ENCODE measurements at regions of chr19 and their contacts with region 1.

Region 1: GRCh38 chr19:17847538-17848366 is at the start of gene JAK3:
- DNase-seq: peak; percentile 76 to 88 (median 88)
- ATAC-seq: peak; percentile 68 to 76
- H3K4me3 ChIP-seq: peak within 1 kb of the TSS; percentile 72
- H3K27ac ChIP-seq: peak within 1 kb of the TSS; percentile 80
- H3K4me1 ChIP-seq: peaks cover 6% of the 10 kb centered on the region
- H3K27me3 ChIP-seq: no peaks in the 10 kb centered on the region
- total RNA-seq, gene JAK3: 1.6 to 5.3 (median 4.0) TPM

Region 2: GRCh38 chr19:17309198-17309961 is 538.4 kb before region 1 on chr19 and contains the start of gene DDA1:
- intact Hi-C with region 1: no loop called
- DNase-seq: peak; percentile 99 to 100 (median 100)
- ATAC-seq: peak; percentile 94
- H3K4me3 ChIP-seq: peak within 1 kb of the TSS; percentile 77
- H3K27ac ChIP-seq: no peak within 1 kb of the TSS
- H3K4me1 ChIP-seq: no peaks in the 10 kb centered on the region
- H3K27me3 ChIP-seq: no peaks in the 10 kb centered on the region
- total RNA-seq, gene DDA1: 29.7 to 33.6 (median 30.8) TPM

Region 3: GRCh38 chr19:17539238-17540117 is 308.3 kb before region 1 on chr19:
- intact Hi-C with region 1: no loop called
- DNase-seq: peak; percentile 98
- ATAC-seq: peak; percentile 92 to 93
- H3K4me3 ChIP-seq: peak overlapping the region; percentile 22
- H3K27ac ChIP-seq: no peak overlapping the region
- H3K4me1 ChIP-seq: no peaks in the 10 kb centered on the region
- H3K27me3 ChIP-seq: no peaks in the 10 kb centered on the region

Region 4: DNA sequence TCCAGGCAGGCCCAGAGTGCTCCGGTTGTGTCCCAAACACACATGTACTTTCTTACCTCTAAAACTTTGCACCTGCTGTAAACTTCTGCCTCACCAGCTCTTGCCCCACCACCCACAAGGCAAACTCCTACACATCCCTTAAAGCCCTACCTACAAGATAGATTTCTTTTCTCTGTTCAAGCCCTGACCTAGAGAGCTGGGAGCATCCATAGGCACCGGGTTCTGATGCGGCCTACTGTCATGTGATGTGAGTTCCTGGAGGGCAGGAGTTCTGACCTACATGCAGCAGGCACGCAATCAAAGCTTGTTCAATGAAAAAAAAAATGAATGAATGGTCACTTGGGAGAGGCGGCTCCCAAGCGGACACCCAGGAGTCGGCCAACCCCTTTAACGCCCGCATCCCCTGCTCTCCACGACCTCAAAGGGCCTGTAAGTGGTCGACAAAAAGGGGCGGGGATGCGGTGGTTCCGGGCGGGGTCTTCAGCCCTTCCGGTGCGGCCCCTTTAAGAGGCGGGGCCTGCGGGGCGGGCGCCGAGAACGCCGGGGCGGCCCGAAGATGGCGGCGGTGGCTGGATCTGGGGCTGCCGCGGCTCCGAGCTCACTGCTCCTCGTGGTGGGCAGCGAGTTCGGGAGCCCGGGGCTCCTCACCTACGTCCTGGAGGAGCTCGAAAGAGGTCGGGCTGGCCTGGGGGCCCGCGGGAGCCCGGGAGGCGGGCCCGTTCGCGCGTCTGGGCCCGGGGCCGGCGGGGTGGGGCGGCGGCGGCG is 128.6 kb before region 1 on chr19 and contains the start of gene MAP1S:
- intact Hi-C with region 1: loop called in 1 of 4 experiments (anchors 5 kb)
- DNase-seq: peak; percentile 71 to 89 (median 87)
- ATAC-seq: peak; percentile 55 to 63
- H3K4me3 ChIP-seq: peak within 1 kb of the TSS; percentile 96
- H3K27ac ChIP-seq: peak within 1 kb of the TSS; percentile 63
- H3K4me1 ChIP-seq: peaks cover 15% of the 10 kb centered on the region
- H3K27me3 ChIP-seq: no peaks in the 10 kb centered on the region
- total RNA-seq, gene MAP1S: 24.8 to 35.5 (median 31.6) TPM

Region 5: DNA sequence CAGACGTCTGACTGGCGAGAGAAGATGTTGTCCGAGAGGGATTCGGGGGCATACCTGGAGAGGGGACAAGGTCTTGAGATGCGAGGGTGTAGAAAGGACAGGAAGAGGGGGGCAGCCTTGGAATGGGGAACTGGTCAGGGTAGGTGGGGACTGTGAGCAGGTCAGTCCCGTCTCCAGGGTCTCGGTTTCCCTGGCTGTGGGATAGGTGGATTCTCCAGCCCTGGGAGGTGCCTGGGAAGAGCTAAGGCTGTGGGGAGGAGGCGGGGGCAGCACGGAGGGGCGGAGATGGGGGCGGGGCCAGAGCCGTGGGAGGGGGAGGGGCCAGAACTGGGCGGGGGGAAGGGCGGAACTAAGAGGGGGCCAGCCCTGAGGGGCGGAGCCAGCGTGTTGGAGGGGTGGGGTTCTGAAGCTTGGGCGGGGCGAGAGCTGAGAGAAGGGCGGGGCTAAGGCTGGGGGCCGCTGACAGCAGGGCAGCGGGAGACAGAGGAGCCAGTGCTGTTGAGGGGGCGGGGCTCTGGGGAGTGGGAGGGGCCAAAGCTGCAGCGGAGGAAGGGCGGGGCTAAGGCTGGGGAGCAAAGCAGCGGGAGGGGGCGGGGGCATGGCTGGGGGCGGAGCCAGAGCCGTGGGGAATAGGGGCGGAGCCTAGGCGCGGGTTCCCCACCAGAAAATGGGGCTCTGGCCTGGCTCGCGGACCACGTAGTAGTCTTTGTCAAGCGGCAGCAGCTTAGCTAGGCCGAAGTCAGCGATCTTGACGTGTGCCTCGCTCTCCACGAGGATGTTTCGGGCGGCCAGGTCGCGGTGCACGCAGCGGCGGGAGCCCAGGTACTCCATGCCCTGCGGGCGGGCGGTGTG is 17.0 kb before region 1 on chr19:
- intact Hi-C with region 1: no loop called
- DNase-seq: peak; percentile 78 to 87 (median 87)
- ATAC-seq: peak; percentile 63 to 93
- H3K4me3 ChIP-seq: no peak overlapping the region
- H3K27ac ChIP-seq: no peak overlapping the region
- H3K4me1 ChIP-seq: no peaks in the 10 kb centered on the region
- H3K27me3 ChIP-seq: no peaks in the 10 kb centered on the region

Measured in right cardiac atrium (tissue), 5 donors.